GM18951 (cell line): ENCODE measurements at regions of chr7 and their contacts with region 1.

Region 1: GRCh38 chr7:5077740-5078139 is 32.1 kb downstream of the RBAK start:
- POLR2A ChIP-seq: no peak

Region 2: GRCh38 chr7:4470246-4470645 is 607.5 kb before region 1 on chr7:
- in situ Hi-C with region 1: no loop called
- POLR2A ChIP-seq: no peak

Region 3: GRCh38 chr7:4531236-4531635 is 546.5 kb before region 1 on chr7:
- in situ Hi-C with region 1: no loop called
- POLR2A ChIP-seq: no peak

Region 4: GRCh38 chr7:4610768-4611467 is 466.8 kb before region 1 on chr7:
- in situ Hi-C with region 1: loop called (anchors 25 kb)
- POLR2A ChIP-seq: no peak

Region 5: DNA sequence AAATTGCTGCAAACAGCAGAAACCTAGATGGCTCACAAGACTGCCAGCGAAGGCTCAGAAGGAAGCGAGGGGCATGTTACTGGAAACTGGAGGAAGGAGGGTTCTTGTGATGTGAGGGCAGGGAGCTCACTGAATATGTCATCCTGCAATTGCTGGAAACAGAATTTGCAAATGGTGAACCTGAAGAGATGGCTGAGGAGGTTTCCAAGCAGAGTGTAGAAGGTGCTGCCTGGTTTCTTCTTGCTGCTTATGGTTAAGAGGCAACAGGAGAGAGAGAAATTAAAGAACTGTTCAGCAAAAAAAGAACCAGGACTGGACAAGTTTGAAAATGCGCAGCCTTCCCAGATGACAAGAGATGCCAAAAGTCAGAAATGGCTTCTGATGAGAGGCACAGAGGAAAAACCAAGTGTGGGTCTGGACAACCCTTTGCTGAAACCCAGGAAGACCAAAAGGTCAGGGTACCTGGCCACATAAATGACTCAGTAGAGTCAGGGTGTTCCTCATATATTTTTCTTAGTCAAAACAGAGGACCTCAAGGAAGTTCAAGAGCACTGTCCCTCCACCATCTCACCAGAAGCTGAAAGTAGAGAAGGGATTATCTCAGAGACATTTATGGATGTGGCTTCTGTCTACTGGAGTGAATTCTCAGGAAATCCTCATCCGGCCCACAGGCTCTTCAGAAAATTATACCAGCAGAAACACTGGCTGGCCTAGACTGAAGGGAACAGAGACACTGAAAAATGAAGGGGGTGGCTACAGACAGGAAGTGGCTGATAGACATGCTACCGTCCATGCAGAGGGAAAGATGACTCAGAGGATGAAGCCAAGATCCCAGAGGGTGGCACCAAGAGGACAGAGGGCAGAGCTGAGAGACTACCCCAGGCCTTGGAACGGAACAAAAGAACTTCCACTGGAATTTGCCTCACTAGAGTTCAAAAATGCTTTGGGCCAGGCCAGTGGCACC is 226.0 kb before region 1 on chr7:
- in situ Hi-C with region 1: loop called (anchors 25 kb)
- POLR2A ChIP-seq: no peak